ENCODE measurements at regions of chr7 and their contacts with region 1.

Region 1: DNA sequence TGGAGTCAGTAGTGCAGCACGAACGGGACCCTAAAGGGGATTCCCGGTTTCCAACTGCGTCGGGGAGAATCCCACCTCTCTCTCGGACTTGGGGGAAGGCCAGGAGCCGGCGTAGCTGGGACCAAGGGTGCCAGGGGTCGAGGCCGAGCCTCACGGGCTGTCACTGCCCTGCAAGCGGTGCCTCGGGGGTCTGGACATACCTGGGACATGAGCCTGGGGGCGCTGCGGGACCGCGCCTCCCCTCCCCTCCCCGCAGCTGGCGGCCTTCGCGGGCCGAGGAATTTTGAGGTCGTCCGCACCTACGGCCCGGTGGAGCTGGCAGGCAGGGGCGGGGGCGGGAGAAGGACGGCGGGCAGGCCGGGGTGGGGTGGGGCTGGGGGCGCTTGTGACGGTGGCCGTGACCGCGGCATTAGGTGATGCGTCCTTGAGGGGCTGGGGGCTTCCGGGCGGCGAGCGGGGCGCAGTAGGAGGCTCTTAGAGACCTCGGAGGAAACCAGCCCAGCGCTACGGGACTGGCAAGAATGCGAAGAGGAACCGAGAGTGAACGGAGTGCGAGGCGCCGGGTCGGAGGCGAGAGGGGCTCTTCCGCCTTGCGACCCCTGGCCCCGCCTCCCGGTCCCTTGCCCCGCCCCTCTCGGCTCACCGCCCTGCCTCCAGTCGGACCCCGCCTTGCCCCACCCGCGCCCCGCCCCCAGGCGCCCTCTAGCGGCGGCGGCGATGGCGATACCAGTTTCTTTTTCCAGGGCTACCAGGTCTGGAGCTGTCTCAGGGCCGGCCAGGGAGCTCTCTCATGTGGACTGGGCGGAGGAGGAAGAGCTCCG is 48.3 kb downstream of the NPVF start:
- DNase-seq: peak; percentile 91
- H3K4me3 Mint-ChIP-seq: peak overlapping the region; percentile 80
- H3K27ac Mint-ChIP-seq: peak overlapping the region; percentile 53
- H3K4me1 Mint-ChIP-seq: peaks cover 16% of the 10 kb centered on the region
- H3K27me3 Mint-ChIP-seq: peaks cover 14% of the 10 kb centered on the region

Region 2: DNA sequence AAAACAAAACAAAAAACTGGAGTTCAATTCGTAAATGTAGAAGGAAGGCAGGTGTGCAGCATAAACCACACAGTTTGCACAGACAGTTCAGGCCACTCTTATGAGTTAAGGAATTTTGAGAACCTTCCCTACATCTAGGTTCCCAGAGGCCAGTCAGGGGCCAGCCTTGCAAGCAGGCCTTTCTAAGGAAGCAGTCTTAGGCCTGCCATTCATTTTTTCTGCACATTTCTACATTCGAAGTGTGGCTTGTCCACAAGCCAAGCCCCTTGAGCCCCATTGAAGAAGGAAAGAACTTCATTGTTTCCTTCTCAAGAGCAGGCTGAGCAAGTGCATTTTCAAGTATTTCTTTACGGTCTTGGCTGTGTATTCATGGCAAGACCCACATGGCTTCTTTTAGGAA is 188.6 kb before region 1 on chr7:
- intact Hi-C with region 1: no loop called
- DNase-seq: no peak
- H3K4me3 Mint-ChIP-seq: no peak overlapping the region
- H3K27ac Mint-ChIP-seq: no peak overlapping the region
- H3K4me1 Mint-ChIP-seq: no peaks in the 10 kb centered on the region
- H3K27me3 Mint-ChIP-seq: peaks cover 21% of the 10 kb centered on the region

Region 3: DNA sequence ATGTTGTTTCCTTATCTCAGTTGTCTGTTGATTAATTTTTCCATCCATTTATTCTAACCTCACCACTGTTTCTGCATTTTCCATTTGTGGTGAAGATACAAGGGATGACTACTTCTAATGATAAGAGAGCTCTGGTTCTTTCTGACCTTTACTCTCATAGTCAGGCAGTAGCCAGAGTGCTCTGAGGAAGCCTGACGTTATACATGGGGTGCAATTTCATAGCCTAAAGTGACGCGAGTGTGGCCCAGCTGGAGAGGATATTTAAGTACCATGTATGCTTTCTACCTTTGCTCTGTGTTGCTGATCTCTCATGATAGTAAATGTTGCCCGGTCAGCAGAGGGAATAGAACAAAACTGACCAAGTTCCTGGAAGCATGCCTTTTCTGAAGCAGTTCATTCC is 21.0 kb before region 1 on chr7:
- intact Hi-C with region 1: loop called (anchors 1 kb)
- DNase-seq: no peak
- H3K4me3 Mint-ChIP-seq: no peak overlapping the region
- H3K27ac Mint-ChIP-seq: no peak overlapping the region
- H3K4me1 Mint-ChIP-seq: no peaks in the 10 kb centered on the region
- H3K27me3 Mint-ChIP-seq: no peaks in the 10 kb centered on the region

Measured in activated T-helper 1 cell treated with anti-CD3 and anti-CD28 coated beads, Interleukin-12 subunit alpha, Interleukin-12 subunit beta, Interleukin-2, Interleukin-4 antibody, amounts not matched to agents 30 ng/mL and 10 ng/mL and 1 ng/mL, durations not matched to agents 14 hours and 24 hours and 36 hours (primary cell).